Adrenal gland (tissue), 19 donors: ENCODE measurements at regions of chr19 and their contacts with region 1.

Region 1: DNA sequence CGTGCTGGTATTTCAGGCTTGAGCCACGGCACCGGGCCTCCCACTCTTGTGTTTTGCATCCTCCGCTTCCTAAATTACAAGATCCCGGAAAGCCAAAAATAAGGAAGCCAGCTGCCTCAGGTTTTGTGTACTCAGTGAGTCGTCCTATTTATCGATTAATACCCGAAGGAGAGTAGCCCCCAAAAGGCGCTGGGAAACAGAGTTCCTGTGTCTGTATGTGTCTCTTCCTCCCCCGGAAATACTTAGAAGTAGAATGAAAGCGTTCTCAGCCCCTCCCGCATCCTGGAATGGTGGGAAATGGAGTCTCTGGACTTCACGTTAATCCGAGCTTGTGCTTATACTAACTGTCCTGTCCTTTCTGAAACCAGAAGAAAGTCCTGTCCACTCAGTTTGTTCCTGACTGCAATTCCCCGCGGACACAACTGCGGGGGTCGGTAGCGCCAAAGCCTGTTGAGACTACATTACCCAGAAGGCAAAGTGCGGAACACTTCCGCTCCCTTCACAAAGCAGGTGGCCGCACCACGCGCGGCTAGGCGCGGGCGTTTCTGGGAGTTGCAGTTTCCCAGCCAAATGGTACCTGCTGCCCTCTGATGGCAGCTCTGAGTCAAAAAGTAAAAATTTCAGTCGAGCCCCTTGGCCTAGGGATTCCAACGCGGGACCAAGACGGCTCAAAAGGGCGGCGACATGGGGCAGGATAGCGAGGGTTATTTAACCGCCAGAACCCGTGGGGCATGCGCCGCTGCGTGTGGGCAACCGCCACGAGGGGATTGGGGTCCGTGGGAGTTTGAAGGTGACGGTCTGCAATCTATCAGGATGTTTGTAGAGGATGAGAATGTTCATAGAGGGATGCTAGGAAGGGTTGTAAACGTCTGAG is 2.2 kb upstream of the GSK3A start:
- DNase-seq: peak; percentile 91 to 97 (median 94)
- H3K4me3 ChIP-seq: peak overlapping the region in 3 of 4 donors; percentile 37 to 78 (median 42)
- H3K27ac ChIP-seq: peak overlapping the region; percentile 65 to 93 (median 88)
- H3K4me1 ChIP-seq: peaks cover 31 to 55% of the 10 kb centered on the region in 2 donors
- H3K27me3 ChIP-seq: no peaks in the 10 kb centered on the region
- CTCF ChIP-seq: peak; percentile 34 to 68 (median 56)
- POLR2A ChIP-seq: peak in 1 of 2 donors; percentile 74

Region 2: DNA sequence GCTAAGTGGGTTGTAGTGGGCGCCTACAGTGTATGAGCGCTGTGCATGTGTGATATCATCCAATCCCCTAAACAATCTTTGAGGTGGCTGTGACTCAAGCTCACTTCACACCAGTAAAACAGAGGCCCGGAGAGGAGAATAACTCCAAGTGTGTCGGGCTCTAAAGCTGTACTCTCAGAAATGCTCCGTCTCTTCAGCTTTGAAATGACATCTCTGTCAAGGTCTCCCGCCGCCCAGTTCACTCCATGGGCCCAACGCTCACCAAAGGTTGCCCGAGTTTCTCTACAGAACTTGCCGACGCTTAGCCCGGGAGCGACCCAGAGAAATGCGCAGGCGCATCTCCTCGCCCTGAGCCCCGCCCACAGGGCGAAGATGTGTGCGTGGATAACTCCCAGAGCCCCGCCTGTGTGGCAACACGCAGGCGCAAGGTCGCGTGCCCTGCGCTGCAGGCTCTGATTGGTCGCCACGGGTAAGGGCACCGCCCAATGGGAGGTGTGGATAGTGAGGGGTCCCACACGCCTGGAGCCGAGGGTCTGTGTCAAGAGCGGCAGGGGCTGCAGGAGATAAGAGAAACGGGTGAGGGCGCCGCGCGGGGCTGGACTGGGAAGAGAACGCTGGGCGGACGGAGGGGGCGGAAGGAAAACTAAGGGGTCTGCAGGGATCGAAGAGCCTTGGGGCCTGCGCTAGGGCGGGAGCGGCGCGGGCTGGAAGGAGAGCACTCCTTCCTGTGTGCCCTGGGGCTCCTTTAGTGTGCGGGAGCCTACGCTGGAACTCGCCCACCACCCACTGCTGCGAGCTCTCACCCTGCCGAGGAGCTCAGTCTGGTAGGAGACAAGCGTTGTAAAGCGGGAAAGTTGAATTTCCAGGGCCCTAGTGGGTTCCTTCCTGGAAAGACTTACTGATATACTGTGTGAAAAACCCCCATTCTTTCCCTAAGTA is 24.5 kb before region 1 on chr19 and contains the start of gene ZNF526:
- intact Hi-C with region 1: no loop called
- DNase-seq: peak; percentile 97 to 98 (median 97)
- H3K4me3 ChIP-seq: peak within 1 kb of the TSS; percentile 52 to 97 (median 78)
- H3K27ac ChIP-seq: peak within 1 kb of the TSS; percentile 64 to 97 (median 81)
- H3K4me1 ChIP-seq: peaks cover 17 to 49% of the 10 kb centered on the region in 2 donors
- H3K27me3 ChIP-seq: no peaks in the 10 kb centered on the region
- CTCF ChIP-seq: no peak
- POLR2A ChIP-seq: peak in 1 of 2 donors; percentile 78
- total RNA-seq, gene ZNF526: 4.2 to 12.5 (median 8.9) TPM

Region 3: GRCh38 chr19:42290523-42291438 is 46.2 kb after region 1 on chr19:
- intact Hi-C with region 1: loop called (anchors 5 kb)
- DNase-seq: peak in 1 of 7 donors; percentile 36
- H3K4me3 ChIP-seq: no peak overlapping the region
- H3K27ac ChIP-seq: no peak overlapping the region
- H3K4me1 ChIP-seq: peaks cover 12 to 13% of the 10 kb centered on the region in 2 donors
- H3K27me3 ChIP-seq: no peaks in the 10 kb centered on the region
- CTCF ChIP-seq: peak in 5 of 6 experiments; percentile 23 to 39 (median 33)
- POLR2A ChIP-seq: no peak